ENCODE measurements at regions of chr19 and their contacts with region 1.

Region 1: GRCh38 chr19:47483800-47484690 is at the start of gene KPTN:
- DNase-seq: peak; percentile 75 to 99
- H3K4me3 ChIP-seq: peak within 1 kb of the TSS; percentile 76 to 90 (median 83)
- H3K27ac ChIP-seq: peak within 1 kb of the TSS; percentile 94
- H3K4me1 ChIP-seq: peaks cover 0 to 8% (median 3%) of the 10 kb centered on the region in 4 experiments; a peak in 2 of 7 replicates
- H3K27me3 ChIP-seq: no peaks in the 10 kb centered on the region
- CTCF ChIP-seq: peak; percentile 93 to 99 (median 95)
- EP300 ChIP-seq: no peak
- POLR2A ChIP-seq: peak in 1 of 2 experiments; percentile 68; a peak in 2 of 3 replicates
- RAD21 ChIP-seq: peak; percentile 70 to 76
- total RNA-seq, gene KPTN: 23.6 and 28.0 TPM in 2 replicates

Region 2: GRCh38 chr19:47436712-47437401 is 47.2 kb before region 1 on chr19:
- CTCF ChIA-PET with region 1: interaction called, 80 read pairs
- POLR2A ChIA-PET with region 1: interaction called, 6 read pairs
- DNase-seq: peak in 1 of 2 experiments; percentile 96
- H3K4me3 ChIP-seq: no peak overlapping the region
- H3K27ac ChIP-seq: no peak overlapping the region
- H3K4me1 ChIP-seq: peaks cover 0 to 4% (median 1%) of the 10 kb centered on the region in 4 experiments; a peak in 2 of 7 replicates
- H3K27me3 ChIP-seq: no peaks in the 10 kb centered on the region; a peak in 1 of 7 replicates
- CTCF ChIP-seq: peak; percentile 93 to 95 (median 94)
- EP300 ChIP-seq: no peak
- POLR2A ChIP-seq: no peak
- RAD21 ChIP-seq: peak; percentile 96 to 98

Region 3: DNA sequence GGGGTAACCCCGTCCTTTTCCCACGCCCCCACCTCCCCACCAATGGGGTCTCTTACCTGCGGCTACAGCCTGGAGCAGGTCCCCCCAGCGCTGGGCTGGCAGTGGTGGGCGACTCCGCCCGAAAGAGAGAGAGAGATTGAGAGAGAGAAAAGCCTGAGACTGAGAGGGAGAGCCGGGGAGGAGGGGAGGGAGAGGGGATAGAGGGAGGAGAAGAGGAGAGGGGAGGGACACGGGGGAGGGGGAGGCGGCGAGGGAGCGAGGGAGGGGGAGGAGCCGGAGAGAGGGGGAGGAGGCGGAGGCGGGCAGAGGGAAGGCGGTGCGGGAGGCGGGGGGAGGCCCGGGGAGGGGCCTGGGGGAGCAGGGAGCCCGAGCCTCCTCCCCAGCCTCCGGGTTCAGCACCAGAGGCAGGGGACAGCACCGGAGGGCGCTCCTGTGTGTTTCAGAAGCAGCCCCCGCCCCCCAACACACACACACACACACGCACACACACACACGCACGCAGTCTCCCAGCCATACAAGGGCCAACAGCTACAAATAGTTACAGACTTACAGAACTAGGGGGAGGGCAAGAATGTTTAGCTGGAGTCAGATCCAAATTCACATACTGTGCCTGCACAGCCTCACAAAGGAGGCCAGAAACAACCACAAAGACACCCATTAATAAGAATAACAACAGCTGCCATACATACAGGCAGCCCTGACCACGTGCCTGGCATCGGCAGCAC is 12.2 kb before region 1 on chr19 and contains the start of gene SLC8A2:
- CTCF ChIA-PET with region 1: interaction called, 20 read pairs
- POLR2A ChIA-PET with region 1: interaction called, 8 read pairs
- DNase-seq: peak; percentile 70 to 89
- H3K4me3 ChIP-seq: peak within 1 kb of the TSS; percentile 61 to 86 (median 68)
- H3K27ac ChIP-seq: no peak within 1 kb of the TSS
- H3K4me1 ChIP-seq: peaks cover 4 to 33% (median 18%) of the 10 kb centered on the region in 4 experiments
- H3K27me3 ChIP-seq: peaks cover 0 to 5% (median 3%) of the 10 kb centered on the region in 4 experiments; a peak in 3 of 7 replicates
- CTCF ChIP-seq: no peak
- EP300 ChIP-seq: no peak
- POLR2A ChIP-seq: no peak
- RAD21 ChIP-seq: no peak
- total RNA-seq, gene SLC8A2: 7.3 and 8.3 TPM in 2 replicates

Region 4: GRCh38 chr19:47507012-47507411 is 23.0 kb after region 1 on chr19:
- CTCF ChIA-PET with region 1: interaction called, 10 read pairs
- POLR2A ChIA-PET with region 1: interaction called, 17 read pairs
- DNase-seq: no peak
- H3K4me3 ChIP-seq: no peak overlapping the region
- H3K27ac ChIP-seq: 0 out of 2 replicates have a peak overlapping the region, but pooled peaks have one; percentile 22
- H3K4me1 ChIP-seq: peaks cover 0 to 8% (median under 1%) of the 10 kb centered on the region in 4 experiments; a peak in 4 of 7 replicates
- H3K27me3 ChIP-seq: no peaks in the 10 kb centered on the region
- CTCF ChIP-seq: no peak
- EP300 ChIP-seq: no peak
- POLR2A ChIP-seq: no peak
- RAD21 ChIP-seq: no peak

Region 5: GRCh38 chr19:47600246-47601179 is 116.5 kb after region 1 on chr19:
- CTCF ChIA-PET with region 1: no interaction called
- POLR2A ChIA-PET with region 1: interaction called, 10 read pairs
- DNase-seq: peak; percentile 99
- H3K4me3 ChIP-seq: peak overlapping the region; percentile 61 to 71 (median 65)
- H3K27ac ChIP-seq: peak overlapping the region; percentile 50; the same call in 1 of the 2 replicates
- H3K4me1 ChIP-seq: peaks cover 0 to 6% (median 4%) of the 10 kb centered on the region in 4 experiments; a peak in 6 of 7 replicates
- H3K27me3 ChIP-seq: no peaks in the 10 kb centered on the region
- CTCF ChIP-seq: no peak
- EP300 ChIP-seq: no peak; a peak in 1 of 3 replicates
- POLR2A ChIP-seq: peak in 1 of 2 experiments; percentile 92; a peak in 2 of 3 replicates
- RAD21 ChIP-seq: peak in 1 of 2 experiments; percentile 18; a peak in 1 of 4 replicates